ENCODE measurements at regions of chr11 and their contacts with region 1.

Region 1: DNA sequence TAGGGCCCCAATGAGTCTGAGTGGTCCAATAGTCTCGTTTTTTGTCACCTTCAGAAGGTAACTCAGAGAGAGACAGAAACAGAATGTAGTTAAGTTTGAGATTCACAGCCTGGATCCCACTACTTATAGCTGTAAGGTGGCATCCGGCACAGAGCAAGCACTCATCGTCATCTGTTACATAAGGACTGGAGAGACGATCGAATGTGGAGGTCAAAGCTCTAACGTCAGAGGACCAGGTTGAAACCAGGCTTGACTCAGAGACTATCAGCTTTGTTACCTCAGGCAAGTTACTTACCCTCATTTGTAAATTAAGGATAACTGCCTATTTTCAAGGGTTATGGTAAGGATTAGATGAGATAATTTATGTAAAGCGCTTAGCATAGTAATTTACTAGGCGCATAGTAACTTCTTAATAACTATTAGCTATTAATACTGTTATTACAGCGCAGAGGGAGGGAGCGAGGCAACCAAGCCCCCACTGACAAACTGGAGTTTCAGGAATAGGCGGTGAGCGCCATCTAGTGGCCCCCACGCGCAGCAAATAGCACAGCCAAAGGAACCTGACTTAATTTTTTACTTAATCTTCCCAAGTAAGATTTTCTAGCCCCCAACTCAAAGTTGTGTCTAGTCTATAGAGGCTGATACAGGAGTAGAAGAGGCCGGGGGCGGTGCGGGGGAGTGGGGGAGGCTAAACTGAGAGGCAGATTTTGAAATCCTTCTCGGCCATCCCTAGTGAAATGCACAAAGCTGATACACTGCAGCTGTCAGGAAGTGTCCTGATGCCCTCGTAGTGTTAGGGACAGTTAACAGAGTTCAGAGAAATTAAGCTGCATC is 29.0 kb upstream of the API5 start:
- DNase-seq: peak; percentile 60 to 75 (median 66)
- ATAC-seq: peak; percentile 90
- H3K4me3 ChIP-seq: no peak overlapping the region; the same call in 1 of the 2 replicates
- H3K27ac ChIP-seq: no peak overlapping the region
- H3K4me1 ChIP-seq: no peaks in the 10 kb centered on the region; a peak in 1 of 5 replicates
- H3K27me3 ChIP-seq: peaks cover 0 to 4% of the 10 kb centered on the region in 2 experiments; a peak in 1 of 5 replicates
- CTCF ChIP-seq: peak; percentile 71 to 91 (median 89)
- EP300 ChIP-seq: no peak
- POLR2A ChIP-seq: no peak
- RAD21 ChIP-seq: peak; percentile 57 to 74

Region 2: GRCh38 chr11:41461057-41461681 is 1821.7 kb before region 1 on chr11:
- CTCF ChIA-PET with region 1: no interaction called
- POLR2A ChIA-PET with region 1: no interaction called
- in situ Hi-C with region 1: loop called (anchors 25 kb)
- intact Hi-C with region 1: loop called (anchors 5 kb)
- DNase-seq: peak; percentile 4 to 14 (median 10)
- ATAC-seq: no peak
- H3K4me3 ChIP-seq: no peak overlapping the region
- H3K27ac ChIP-seq: no peak overlapping the region
- H3K4me1 ChIP-seq: no peaks in the 10 kb centered on the region
- H3K27me3 ChIP-seq: no peaks in the 10 kb centered on the region
- CTCF ChIP-seq: peak in 1 of 3 experiments; percentile 46; a peak in 2 of 6 replicates
- EP300 ChIP-seq: no peak
- POLR2A ChIP-seq: no peak
- RAD21 ChIP-seq: peak; percentile 33 to 57; a peak in 3 of 4 replicates

Region 3: GRCh38 chr11:43222215-43222614 is 60.6 kb before region 1 on chr11:
- CTCF ChIA-PET with region 1: no interaction called
- POLR2A ChIA-PET with region 1: no interaction called
- in situ Hi-C with region 1: no loop called
- intact Hi-C with region 1: loop called (anchors 10 kb)
- DNase-seq: no peak
- ATAC-seq: no peak
- H3K4me3 ChIP-seq: no peak overlapping the region
- H3K27ac ChIP-seq: no peak overlapping the region
- H3K4me1 ChIP-seq: no peaks in the 10 kb centered on the region
- H3K27me3 ChIP-seq: no peaks in the 10 kb centered on the region
- CTCF ChIP-seq: no peak
- EP300 ChIP-seq: no peak
- POLR2A ChIP-seq: no peak
- RAD21 ChIP-seq: no peak

Measured in K562 (cell line).